Lower leg skin (tissue), 4 donors: ENCODE measurements at regions of chr16 and their contacts with region 1.

Region 1: GRCh38 chr16:8797364-8798173 is at the starts of genes PMM2 and TMEM186:
- DNase-seq: peak; percentile 96 to 99
- H3K4me3 ChIP-seq: peak within 1 kb of the TSS; percentile 96
- CTCF ChIP-seq: no peak
- POLR2A ChIP-seq: no peak
- total RNA-seq, gene PMM2: 20.5 to 41.8 (median 26.8) TPM
- total RNA-seq, gene TMEM186: 7.5 to 11.2 (median 10.8) TPM

Region 2: DNA sequence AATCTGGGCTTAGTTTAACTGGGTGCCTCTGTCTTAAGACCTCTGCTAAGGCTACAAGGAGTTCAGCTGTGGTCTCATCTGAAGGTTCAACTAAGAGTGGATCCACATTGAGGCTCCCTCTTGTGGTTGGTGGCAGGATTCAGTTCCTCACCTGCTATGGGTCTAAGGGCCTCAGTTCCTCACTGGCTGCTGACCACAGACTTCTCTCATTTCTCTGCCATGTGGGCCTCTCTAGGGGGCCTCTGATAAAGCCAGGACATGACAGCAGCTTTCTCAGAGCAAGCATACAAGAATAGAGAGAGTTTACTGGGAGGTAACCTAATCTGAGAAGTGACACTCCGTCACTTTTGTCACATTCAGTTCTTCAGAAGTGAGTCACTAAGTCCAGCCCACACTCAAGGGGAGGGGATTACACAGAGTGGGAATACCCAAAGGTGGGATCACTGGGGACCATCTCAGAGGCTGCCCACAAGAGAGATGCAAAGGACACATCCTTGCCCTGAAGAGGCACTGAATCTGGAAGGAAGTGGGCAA is 142.3 kb before region 1 on chr16:
- intact Hi-C with region 1: loop called (anchors 5 kb)
- DNase-seq: peak in 1 of 2 donors; percentile 58
- H3K4me3 ChIP-seq: no peak overlapping the region
- CTCF ChIP-seq: no peak
- POLR2A ChIP-seq: no peak